ENCODE measurements at regions of chr2 and their contacts with region 1.

Region 1: GRCh38 chr2:130355578-130356431 is at the start of gene PTPN18:
- DNase-seq: peak; percentile 27 to 79 (median 46)
- ATAC-seq: peak; percentile 93
- H3K4me3 ChIP-seq: peak within 1 kb of the TSS; percentile 65
- H3K4me3 Mint-ChIP-seq: peak within 1 kb of the TSS; percentile 75 to 91 (median 84)
- H3K27ac ChIP-seq: peak within 1 kb of the TSS; percentile 56
- H3K27ac Mint-ChIP-seq: peak within 1 kb of the TSS in 7 of 9 donors; percentile 45 to 81 (median 63)
- H3K4me1 ChIP-seq: peaks cover 0 to 9% of the 10 kb centered on the region in 2 donors
- H3K4me1 Mint-ChIP-seq: peaks cover 8 to 17% (median 13%) of the 10 kb centered on the region in 7 donors
- H3K27me3 ChIP-seq: no peaks in the 10 kb centered on the region
- H3K27me3 Mint-ChIP-seq: peaks cover 0 to 8% (median 0%) of the 10 kb centered on the region in 5 donors
- total RNA-seq, gene PTPN18: 43.3 to 112 (median 44.2) TPM

Region 2: GRCh38 chr2:130135692-130136541 is 219.9 kb before region 1 on chr2:
- CTCF ChIA-PET with region 1: no interaction called
- POLR2A ChIA-PET with region 1: no interaction called
- intact Hi-C with region 1: no loop called
- DNase-seq: no peak
- ATAC-seq: no peak
- H3K4me3 ChIP-seq: no peak overlapping the region
- H3K4me3 Mint-ChIP-seq: no peak overlapping the region
- H3K27ac ChIP-seq: no peak overlapping the region
- H3K27ac Mint-ChIP-seq: no peak overlapping the region
- H3K4me1 ChIP-seq: no peaks in the 10 kb centered on the region
- H3K4me1 Mint-ChIP-seq: peaks cover 0 to 6% (median 4%) of the 10 kb centered on the region in 7 donors
- H3K27me3 ChIP-seq: no peaks in the 10 kb centered on the region
- H3K27me3 Mint-ChIP-seq: peaks cover 0 to 4% (median 0%) of the 10 kb centered on the region in 5 donors

Region 3: GRCh38 chr2:130372055-130372832 is 16.4 kb after region 1 on chr2:
- CTCF ChIA-PET with region 1: interaction called, 4 read pairs
- POLR2A ChIA-PET with region 1: interaction called, 3 read pairs
- intact Hi-C with region 1: loop called (anchors 1 kb)
- DNase-seq: peak; percentile 49 to 92 (median 71)
- ATAC-seq: peak; percentile 86
- H3K4me3 ChIP-seq: peak overlapping the region; percentile 83
- H3K4me3 Mint-ChIP-seq: peak overlapping the region; percentile 87 to 99 (median 94)
- H3K27ac ChIP-seq: peak overlapping the region; percentile 71
- H3K27ac Mint-ChIP-seq: peak overlapping the region; percentile 88 to 97 (median 95)
- H3K4me1 ChIP-seq: peaks cover 25 to 34% of the 10 kb centered on the region in 2 donors
- H3K4me1 Mint-ChIP-seq: peaks cover 47 to 69% (median 65%) of the 10 kb centered on the region in 7 donors
- H3K27me3 ChIP-seq: no peaks in the 10 kb centered on the region
- H3K27me3 Mint-ChIP-seq: no peaks in the 10 kb centered on the region

Region 4: GRCh38 chr2:130391058-130391871 is 35.5 kb after region 1 on chr2:
- CTCF ChIA-PET with region 1: no interaction called
- POLR2A ChIA-PET with region 1: no interaction called
- intact Hi-C with region 1: loop called in 1 of 2 experiments (anchors 5 kb)
- DNase-seq: peak; percentile 37 to 77 (median 56)
- ATAC-seq: peak; percentile 94
- H3K4me3 ChIP-seq: peak overlapping the region; percentile 56
- H3K4me3 Mint-ChIP-seq: peak overlapping the region; percentile 80 to 94 (median 88)
- H3K27ac ChIP-seq: peak overlapping the region; percentile 32
- H3K27ac Mint-ChIP-seq: peak overlapping the region; percentile 62 to 97 (median 87)
- H3K4me1 ChIP-seq: peaks cover 5 to 8% of the 10 kb centered on the region in 2 donors
- H3K4me1 Mint-ChIP-seq: peaks cover 8 to 20% (median 18%) of the 10 kb centered on the region in 7 donors
- H3K27me3 ChIP-seq: no peaks in the 10 kb centered on the region
- H3K27me3 Mint-ChIP-seq: peaks cover 0 to 15% (median 9%) of the 10 kb centered on the region in 5 donors

Measured in naive thymus-derived CD4-positive, alpha-beta T cell (primary cell).